ENCODE measurements at regions of chr2 and their contacts with region 1.

Region 1: GRCh38 chr2:38178547-38179419 is 102.8 kb upstream of the CYP1B1 start:
- DNase-seq: peak in 2 of 5 donors; percentile 33 to 35
- ATAC-seq: peak; percentile 51 to 63 (median 55)
- H3K4me3 ChIP-seq: no peak overlapping the region
- H3K27ac ChIP-seq: peak overlapping the region; percentile 11 to 86 (median 44)
- H3K4me1 ChIP-seq: peaks cover 0 to 54% (median 2%) of the 10 kb centered on the region in 12 donors
- H3K27me3 ChIP-seq: no peaks in the 10 kb centered on the region
- CTCF ChIP-seq: no peak
- POLR2A ChIP-seq: no peak

Region 2: DNA sequence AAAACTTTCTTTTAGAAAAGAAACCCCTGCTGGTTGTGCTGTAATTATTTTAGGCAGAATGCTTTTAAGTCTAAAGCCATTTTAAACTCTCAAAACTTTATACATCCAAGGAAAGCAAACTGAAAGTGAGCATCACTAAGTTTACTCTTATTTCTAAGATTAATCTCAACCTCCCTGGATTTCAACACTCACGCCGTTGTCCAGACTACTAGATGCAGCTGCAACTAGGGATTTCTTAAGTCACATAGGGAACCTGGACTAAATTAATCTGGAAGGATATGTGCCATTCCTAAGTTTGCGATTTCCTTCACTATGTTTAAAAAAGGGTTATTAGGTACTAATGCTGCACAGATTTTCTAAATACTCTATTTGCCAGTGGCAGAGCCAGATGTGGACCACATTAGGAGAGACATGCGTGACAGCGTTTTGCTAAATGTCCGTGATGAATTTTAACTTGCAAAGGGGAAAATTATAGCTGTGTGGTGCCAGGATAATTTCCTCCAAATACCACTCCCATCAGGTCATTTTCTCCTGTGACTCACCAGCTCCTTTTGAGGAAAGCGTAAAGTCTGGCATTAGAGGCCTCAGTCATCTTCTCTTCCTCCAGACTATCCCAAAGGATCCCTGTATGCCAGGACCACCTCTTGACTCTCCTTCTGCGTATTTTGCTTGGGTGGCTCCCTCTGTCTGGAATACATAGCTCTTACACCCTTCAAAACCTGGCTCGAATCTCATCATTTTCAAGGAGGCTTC is 54.6 kb after region 1 on chr2:
- intact Hi-C with region 1: loop called in 1 of 10 experiments (anchors 10 kb)
- DNase-seq: peak in 3 of 5 donors; percentile 26 to 44 (median 35)
- ATAC-seq: peak; percentile 81 to 96 (median 93)
- H3K4me3 ChIP-seq: peak overlapping the region in 1 of 12 donors; percentile 23
- H3K27ac ChIP-seq: peak overlapping the region in 8 of 12 donors; percentile 4 to 60 (median 41)
- H3K4me1 ChIP-seq: peaks cover 0 to 3% (median 0%) of the 10 kb centered on the region in 12 donors
- H3K27me3 ChIP-seq: peaks cover 0 to 2% (median 0%) of the 10 kb centered on the region in 9 donors
- CTCF ChIP-seq: peak in 4 of 12 donors; percentile 23 to 34 (median 29)
- POLR2A ChIP-seq: no peak

Measured in heart left ventricle (tissue), 16 donors.